ENCODE measurements at regions of chr1 and their contacts with region 1.

Region 1: GRCh38 chr1:154847891-154848290 is 22.2 kb downstream of the KCNN3 start:
- DNase-seq: no peak
- H3K4me3 Mint-ChIP-seq: no peak overlapping the region
- H3K27ac Mint-ChIP-seq: no peak overlapping the region
- H3K4me1 Mint-ChIP-seq: peaks cover 13% of the 10 kb centered on the region
- H3K27me3 Mint-ChIP-seq: peaks cover 9% of the 10 kb centered on the region

Region 2: GRCh38 chr1:154404984-154405761 is 442.7 kb before region 1 on chr1 and contains the start of gene IL6R:
- intact Hi-C with region 1: no loop called
- DNase-seq: peak; percentile 90
- H3K4me3 Mint-ChIP-seq: peak within 1 kb of the TSS; percentile 86
- H3K27ac Mint-ChIP-seq: peak within 1 kb of the TSS; percentile 81
- H3K4me1 Mint-ChIP-seq: peaks cover 64% of the 10 kb centered on the region
- H3K27me3 Mint-ChIP-seq: peaks cover 2% of the 10 kb centered on the region
- total RNA-seq, gene IL6R: 3.0 and 3.3 TPM in 2 replicates

Region 3: DNA sequence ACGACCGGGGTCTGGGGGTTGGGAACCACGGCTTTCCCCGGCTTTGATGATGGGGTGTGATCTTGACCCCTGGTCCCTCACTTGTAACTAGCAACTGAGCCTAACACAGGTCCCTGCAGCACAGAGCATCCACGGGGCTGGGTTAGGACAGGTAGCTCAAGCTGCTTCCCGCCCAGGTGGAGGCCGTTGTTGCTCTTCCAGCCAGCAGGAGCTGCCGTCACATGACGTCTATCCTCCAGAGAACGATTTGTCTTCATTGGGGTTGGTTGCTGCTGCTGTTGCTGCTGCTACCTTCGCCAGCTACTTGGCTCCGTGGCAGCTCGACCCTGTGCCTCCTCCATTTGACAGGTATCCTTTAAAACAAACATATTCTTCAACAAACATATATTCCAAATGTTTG is 165.6 kb before region 1 on chr1:
- intact Hi-C with region 1: no loop called
- DNase-seq: no peak
- H3K4me3 Mint-ChIP-seq: no peak overlapping the region
- H3K27ac Mint-ChIP-seq: no peak overlapping the region
- H3K4me1 Mint-ChIP-seq: no peaks in the 10 kb centered on the region
- H3K27me3 Mint-ChIP-seq: peaks cover 14% of the 10 kb centered on the region

Region 4: GRCh38 chr1:154809436-154810413 is 38.2 kb before region 1 on chr1:
- intact Hi-C with region 1: loop called (anchors 5 kb)
- DNase-seq: no peak
- H3K4me3 Mint-ChIP-seq: no peak overlapping the region
- H3K27ac Mint-ChIP-seq: peak overlapping the region; percentile 5
- H3K4me1 Mint-ChIP-seq: peaks cover 15% of the 10 kb centered on the region
- H3K27me3 Mint-ChIP-seq: peaks cover 22% of the 10 kb centered on the region